WTC11 (cell line): ENCODE measurements at regions of chr6 and their contacts with region 1.

Region 1: GRCh38 chr6:27630727-27631608 is 158.1 kb upstream of the ZNF184 start:
- DNase-seq: peak; percentile 89
- ATAC-seq: peak; percentile 88
- H3K4me3 Mint-ChIP-seq: peak overlapping the region; percentile 98
- H3K27ac Mint-ChIP-seq: peak overlapping the region; percentile 96
- H3K4me1 Mint-ChIP-seq: peaks cover 6% of the 10 kb centered on the region
- H3K27me3 Mint-ChIP-seq: peaks cover 67% of the 10 kb centered on the region
- CTCF ChIP-seq: no peak

Region 2: GRCh38 chr6:27617700-27618689 is 13.0 kb before region 1 on chr6:
- CTCF ChIA-PET with region 1: interaction called, 11 read pairs
- POLR2A ChIA-PET with region 1: no interaction called
- DNase-seq: peak; percentile 60
- ATAC-seq: peak; percentile 78
- H3K4me3 Mint-ChIP-seq: peak overlapping the region; percentile 99
- H3K27ac Mint-ChIP-seq: 0 out of 2 replicates have a peak overlapping the region, but pooled peaks have one; percentile 9
- H3K4me1 Mint-ChIP-seq: peaks cover 10% of the 10 kb centered on the region
- H3K27me3 Mint-ChIP-seq: peaks cover 12% of the 10 kb centered on the region
- CTCF ChIP-seq: no peak